Dorsolateral prefrontal cortex (tissue), 120 donors: ENCODE measurements at regions of chr15 and their contacts with region 1.

Region 1: GRCh38 chr15:31326156-31326732 is 391 bp upstream of the KLF13 start:
- DNase-seq: peak; percentile 95 to 99 (median 97)
- H3K4me3 ChIP-seq: peak overlapping the region; percentile 63 to 98 (median 88)
- H3K27ac ChIP-seq: peak overlapping the region; percentile 94 to 100 (median 100)
- H3K27me3 ChIP-seq: no peaks in the 10 kb centered on the region
- CTCF ChIP-seq: peak in 21 of 56 donors; percentile 7 to 42 (median 20)

Region 2: GRCh38 chr15:31280046-31280830 is 46.0 kb before region 1 on chr15:
- intact Hi-C with region 1: loop called (anchors 1 kb)
- DNase-seq: peak in 9 of 10 donors; percentile 78 to 95 (median 92)
- H3K4me3 ChIP-seq: peak overlapping the region in 7 of 59 donors; percentile 1 to 27 (median 16)
- H3K27ac ChIP-seq: peak overlapping the region in 58 of 59 donors; percentile 82 to 98 (median 93)
- H3K27me3 ChIP-seq: no peaks in the 10 kb centered on the region
- CTCF ChIP-seq: peak in 21 of 56 donors; percentile 2 to 37 (median 20)

Region 3: DNA sequence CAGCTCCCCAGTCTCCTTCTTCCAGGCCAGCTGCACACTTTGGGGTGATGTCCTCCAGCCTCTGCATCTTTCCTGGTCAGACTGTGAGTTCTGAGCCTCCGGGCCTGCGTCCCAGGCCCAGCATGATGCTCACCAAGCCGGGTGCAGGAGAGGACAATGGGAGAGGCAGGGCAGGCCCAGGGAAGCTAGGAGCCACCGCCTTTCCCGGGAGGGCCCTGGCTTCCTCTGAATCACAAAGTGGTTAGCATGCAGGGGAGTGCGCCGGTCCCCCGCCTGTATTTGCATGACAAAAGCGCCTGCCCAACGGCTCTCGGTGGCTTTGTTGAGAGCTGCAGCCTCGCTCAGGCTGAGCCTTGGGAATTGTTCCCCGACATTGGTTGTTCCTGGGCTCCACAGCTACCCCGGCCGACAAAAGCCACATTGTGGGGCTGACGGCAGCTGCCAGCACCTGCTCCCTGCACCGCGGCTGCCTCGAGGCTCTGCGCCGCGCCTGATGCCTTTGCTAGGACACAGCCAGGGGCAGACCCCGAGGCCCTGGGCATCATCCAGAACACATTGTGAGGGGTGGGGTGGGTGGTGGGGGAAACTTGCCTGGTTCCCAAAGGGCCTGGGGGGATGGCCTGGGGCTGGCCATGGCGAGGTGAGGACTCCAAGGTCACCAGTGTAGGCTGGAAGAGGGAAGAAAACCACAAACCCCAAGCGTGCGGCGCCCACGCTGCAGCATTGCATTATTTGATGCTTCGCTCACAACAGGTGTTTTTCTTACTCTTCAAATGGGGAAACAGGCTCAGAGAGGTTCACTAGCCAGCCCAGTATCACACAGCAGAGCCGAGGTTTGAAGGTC is 19.6 kb before region 1 on chr15:
- intact Hi-C with region 1: loop called (anchors 1 kb)
- DNase-seq: peak; percentile 53 to 98 (median 94)
- H3K4me3 ChIP-seq: peak overlapping the region in 17 of 59 donors; percentile 5 to 44 (median 23)
- H3K27ac ChIP-seq: peak overlapping the region; percentile 60 to 99 (median 94)
- H3K27me3 ChIP-seq: no peaks in the 10 kb centered on the region
- CTCF ChIP-seq: peak in 20 of 56 donors; percentile 10 to 42 (median 24)

Region 4: GRCh38 chr15:31353931-31354330 is 27.7 kb after region 1 on chr15:
- intact Hi-C with region 1: no loop called
- DNase-seq: peak in 9 of 10 donors; percentile 70 to 84 (median 76)
- H3K4me3 ChIP-seq: peak overlapping the region in 18 of 59 donors; percentile 6 to 43 (median 24)
- H3K27ac ChIP-seq: peak overlapping the region; percentile 55 to 100 (median 91)
- H3K27me3 ChIP-seq: no peaks in the 10 kb centered on the region
- CTCF ChIP-seq: no peak

Region 5: GRCh38 chr15:31365655-31366127 is 39.4 kb after region 1 on chr15:
- intact Hi-C with region 1: loop called (anchors 1 to 5 kb)
- DNase-seq: peak; percentile 91 to 98 (median 96)
- H3K4me3 ChIP-seq: peak overlapping the region in 56 of 59 donors; percentile 0 to 58 (median 40)
- H3K27ac ChIP-seq: peak overlapping the region; percentile 76 to 100 (median 94)
- H3K27me3 ChIP-seq: no peaks in the 10 kb centered on the region
- CTCF ChIP-seq: peak in 51 of 56 donors; percentile 19 to 63 (median 42)

Region 6: GRCh38 chr15:31391687-31392671 is 65.7 kb after region 1 on chr15:
- intact Hi-C with region 1: loop called in 1 of 2 experiments (anchors 2 kb)
- DNase-seq: peak in 8 of 10 donors; percentile 48 to 83 (median 74)
- H3K4me3 ChIP-seq: peak overlapping the region; percentile 46 to 87 (median 71)
- H3K27ac ChIP-seq: peak overlapping the region in 57 of 59 donors; percentile 3 to 88 (median 71)
- H3K27me3 ChIP-seq: no peaks in the 10 kb centered on the region
- CTCF ChIP-seq: peak in 15 of 56 donors; percentile 6 to 46 (median 27)

Region 7: DNA sequence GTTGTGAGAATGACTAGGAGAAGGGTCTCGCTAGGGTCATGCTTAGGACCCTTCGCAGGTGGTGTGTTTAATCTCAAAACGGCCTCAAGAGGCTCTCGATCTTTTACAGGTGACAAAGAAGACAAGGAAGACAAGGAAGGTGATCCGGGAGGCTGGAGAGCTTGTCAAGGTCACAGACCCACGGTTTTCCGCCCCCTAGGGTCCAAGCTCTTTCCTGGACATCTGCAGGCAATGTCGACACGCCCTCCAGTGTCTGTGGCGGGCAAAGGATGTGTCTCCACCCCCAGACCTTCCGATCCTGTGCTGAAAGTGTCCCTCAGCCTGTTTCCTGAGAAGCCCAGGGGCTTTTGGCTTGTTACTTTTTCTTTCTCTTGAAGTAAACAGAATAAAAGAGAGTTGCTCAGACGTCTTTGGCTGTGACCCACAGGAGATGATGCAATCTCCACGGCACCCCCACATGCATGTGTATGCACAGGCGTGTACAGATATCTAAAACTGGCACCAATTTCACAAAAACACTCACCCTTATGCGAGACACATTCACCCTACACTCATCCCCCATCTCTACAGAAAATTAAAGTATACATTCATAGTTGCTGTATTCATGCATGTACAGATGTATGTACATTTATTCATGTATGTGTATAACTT is 109.1 kb after region 1 on chr15:
- intact Hi-C with region 1: loop called (anchors 2 to 5 kb)
- DNase-seq: peak; percentile 65 to 81 (median 72)
- H3K4me3 ChIP-seq: peak overlapping the region in 37 of 59 donors; percentile 0 to 46 (median 27)
- H3K27ac ChIP-seq: peak overlapping the region in 39 of 59 donors; percentile 1 to 82 (median 41)
- H3K27me3 ChIP-seq: no peaks in the 10 kb centered on the region
- CTCF ChIP-seq: peak in 55 of 56 donors; percentile 34 to 95 (median 84)